Upper lobe of right lung (tissue), 1 donor: ENCODE measurements at regions of chr3 and their contacts with region 1.

Region 1: DNA sequence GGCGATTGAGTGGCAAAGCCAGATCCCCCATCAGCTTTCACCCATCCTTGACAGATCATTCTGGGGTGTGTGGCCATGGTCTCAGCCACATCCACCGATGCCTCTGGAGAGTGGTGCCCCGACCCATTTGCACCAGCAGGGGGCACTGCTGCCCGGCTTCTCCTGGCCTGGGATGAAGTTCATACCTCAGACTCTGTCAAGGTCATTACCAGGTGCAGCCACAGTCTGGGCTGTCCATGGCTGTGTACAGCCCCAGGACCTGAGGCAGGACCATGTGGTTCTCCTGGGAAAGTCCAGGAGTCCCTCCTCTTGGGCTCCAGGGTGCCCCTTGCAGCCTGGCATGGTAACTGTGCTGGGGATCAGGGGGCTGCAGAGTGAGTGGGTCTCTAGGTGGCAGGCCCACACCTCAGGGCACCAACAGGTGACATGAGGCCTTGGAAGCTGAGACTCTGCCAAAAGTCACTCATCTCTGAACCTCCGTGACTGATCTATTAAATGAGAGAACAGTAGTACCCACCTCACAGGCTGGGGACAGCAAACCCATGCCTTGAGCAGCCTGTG is 67.2 kb downstream of the CACNA2D2 start:
- DNase-seq: peak; percentile 88
- ATAC-seq: peak; percentile 84
- H3K4me3 ChIP-seq: no peak overlapping the region
- H3K27ac ChIP-seq: no peak overlapping the region
- H3K4me1 ChIP-seq: no peaks in the 10 kb centered on the region
- H3K27me3 ChIP-seq: no peaks in the 10 kb centered on the region
- CTCF ChIP-seq: peak; percentile 90

Region 2: DNA sequence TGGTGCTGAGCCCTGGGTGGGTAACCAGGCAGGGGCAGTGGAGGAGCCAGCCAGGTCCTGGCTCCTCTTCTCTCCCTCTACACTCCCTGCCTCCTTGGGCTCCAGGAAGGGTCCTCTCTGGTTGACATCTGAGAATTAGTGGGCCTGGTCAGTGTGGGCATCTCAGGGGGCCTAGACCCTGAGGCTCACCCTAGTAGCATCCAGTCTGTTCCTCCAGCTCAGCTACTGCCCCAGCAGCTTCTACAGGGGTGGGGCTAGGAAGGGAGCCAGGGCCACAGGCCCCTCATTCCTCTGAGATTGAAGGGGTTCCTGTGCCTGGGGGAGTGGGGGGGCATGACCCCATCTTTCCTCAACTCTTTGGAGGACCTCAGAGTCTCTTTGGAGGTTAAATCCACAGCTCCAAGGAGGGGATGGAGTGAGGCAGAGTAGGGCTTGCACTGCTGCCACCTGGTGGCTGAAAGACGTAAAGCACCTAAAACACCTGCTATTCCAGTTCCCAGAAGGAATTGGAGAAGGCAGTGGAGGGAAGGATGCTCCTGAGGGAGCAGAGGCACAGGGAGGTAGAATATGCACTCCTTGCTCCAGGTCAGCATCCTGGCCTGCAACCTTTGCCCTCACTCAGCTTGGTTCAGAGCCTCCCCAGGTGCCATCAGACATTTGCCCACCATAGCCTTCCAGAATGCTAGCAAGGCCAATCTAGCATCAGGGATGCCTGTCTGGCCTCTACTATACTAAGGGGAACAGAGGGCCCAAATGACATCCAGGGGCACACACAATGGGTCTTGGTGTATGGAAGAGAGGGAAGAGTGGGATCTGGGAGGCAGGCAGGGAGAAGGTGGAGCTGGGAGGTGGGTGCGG is 106.2 kb after region 1 on chr3:
- intact Hi-C with region 1: loop called (anchors 10 kb)
- DNase-seq: peak; percentile 74
- ATAC-seq: peak; percentile 87
- H3K4me3 ChIP-seq: no peak overlapping the region
- H3K27ac ChIP-seq: no peak overlapping the region
- H3K4me1 ChIP-seq: no peaks in the 10 kb centered on the region
- H3K27me3 ChIP-seq: no peaks in the 10 kb centered on the region
- CTCF ChIP-seq: peak; percentile 90